K562 (cell line): ENCODE measurements at regions of chr16 and their contacts with region 1.

Region 1: DNA sequence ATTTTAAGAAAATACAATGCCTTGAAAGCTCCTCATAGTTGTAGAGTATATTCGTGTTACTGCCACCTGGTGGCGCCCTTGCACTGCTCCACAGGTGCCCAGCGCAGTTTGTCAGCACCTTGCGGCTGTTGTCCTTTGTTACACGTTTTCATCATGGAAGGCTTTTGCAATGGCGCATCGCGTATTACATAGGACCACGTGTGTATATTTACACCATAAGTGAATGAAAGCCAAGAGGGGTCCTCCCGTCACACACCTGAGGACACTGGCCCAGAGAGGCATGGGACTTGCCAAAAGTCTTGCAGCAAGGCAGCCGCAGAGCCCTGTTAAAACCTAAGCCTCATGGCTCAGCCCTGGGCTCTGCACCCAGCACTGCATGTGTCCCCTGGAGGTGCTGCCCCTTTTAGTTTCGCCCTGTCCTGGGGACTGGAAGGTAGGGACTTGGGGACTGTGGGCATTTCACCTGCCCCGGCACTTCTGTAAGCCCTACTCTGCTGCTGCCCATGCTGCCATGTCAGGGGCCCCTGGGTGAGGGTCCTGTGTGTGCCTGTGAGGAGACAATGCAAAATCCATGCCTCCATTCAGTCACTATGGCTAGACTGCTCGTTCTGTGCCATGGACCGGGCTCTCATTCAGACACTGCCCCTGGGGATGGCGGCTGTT is 24.3 kb downstream of the POLR3E start:
- DNase-seq: peak; percentile 66 to 76 (median 70)
- ATAC-seq: peak; percentile 91
- H3K4me3 ChIP-seq: no peak overlapping the region
- H3K27ac ChIP-seq: no peak overlapping the region
- H3K4me1 ChIP-seq: no peaks in the 10 kb centered on the region; a peak in 2 of 5 replicates
- H3K27me3 ChIP-seq: no peaks in the 10 kb centered on the region
- CTCF ChIP-seq: peak; percentile 96 to 98 (median 97)
- EP300 ChIP-seq: no peak
- POLR2A ChIP-seq: no peak
- RAD21 ChIP-seq: peak; percentile 87 to 92

Region 2: GRCh38 chr16:21150375-21151001 is 1171.0 kb before region 1 on chr16 and contains the start of gene DNAH3:
- CTCF ChIA-PET with region 1: interaction called, 3 read pairs
- POLR2A ChIA-PET with region 1: no interaction called
- in situ Hi-C with region 1: loop called (anchors 10 kb)
- intact Hi-C with region 1: loop called (anchors 2 kb)
- DNase-seq: peak; percentile 14 to 62 (median 28)
- ATAC-seq: peak; percentile 70
- H3K4me3 ChIP-seq: no peak within 1 kb of the TSS
- H3K27ac ChIP-seq: no peak within 1 kb of the TSS
- H3K4me1 ChIP-seq: peaks cover 4 to 6% of the 10 kb centered on the region in 2 experiments; a peak in 2 of 5 replicates
- H3K27me3 ChIP-seq: peaks cover 4% of the 10 kb centered on the region in 2 experiments; a peak in 3 of 5 replicates
- CTCF ChIP-seq: 0 out of 6 replicates have a peak, but pooled peaks of 1 of the 3 experiments have one; percentile 4
- EP300 ChIP-seq: no peak
- POLR2A ChIP-seq: no peak
- RAD21 ChIP-seq: no peak
- polyA plus RNA-seq, gene DNAH3: 0.65 to 0.84 TPM

Region 3: DNA sequence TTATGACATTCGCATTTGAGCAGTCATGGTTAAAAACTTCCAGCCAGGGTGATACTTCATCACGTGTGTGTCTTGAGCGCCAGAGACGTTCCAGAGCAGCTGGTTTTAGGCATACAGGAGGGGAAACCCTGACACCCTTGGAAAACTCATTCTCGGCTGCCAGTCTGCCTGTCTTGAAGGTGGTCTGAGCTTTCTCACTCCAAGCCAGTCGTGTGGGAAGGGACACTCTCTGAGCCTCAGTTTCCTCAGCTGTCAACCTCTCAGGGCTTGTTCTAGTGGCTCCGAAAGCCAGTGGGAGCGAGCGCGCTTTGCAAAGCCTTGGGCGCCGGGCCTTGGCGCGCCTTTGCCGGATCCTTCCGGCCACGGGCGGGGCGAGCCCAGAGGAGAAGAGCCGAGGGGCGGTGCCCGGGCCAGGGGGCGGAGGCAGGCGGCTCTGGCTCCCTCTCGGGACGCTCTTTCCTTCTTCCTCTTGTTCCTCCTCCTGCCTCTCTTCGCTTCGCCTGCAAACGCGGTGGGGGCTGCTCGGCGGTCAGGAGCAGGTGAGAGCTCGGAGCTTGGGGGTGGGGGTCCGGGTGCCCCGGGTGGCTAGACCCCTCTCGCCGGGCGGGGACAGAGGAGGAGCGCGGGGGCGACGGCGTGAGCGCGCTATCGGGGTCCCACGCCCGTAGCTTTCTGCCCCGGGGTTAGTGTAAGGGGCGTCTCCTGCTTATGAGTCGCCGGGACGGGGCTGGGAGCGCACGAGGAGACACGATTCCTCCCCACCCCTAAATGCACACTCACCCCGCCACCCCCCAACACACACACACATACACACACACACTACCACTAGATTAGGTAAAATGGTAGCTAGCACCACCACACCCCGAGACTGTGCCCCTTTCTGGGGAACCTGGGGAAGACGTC is 1163.0 kb before region 1 on chr16 and contains the start of gene LDAF1:
- CTCF ChIA-PET with region 1: interaction called, 9 read pairs
- POLR2A ChIA-PET with region 1: no interaction called
- in situ Hi-C with region 1: loop called (anchors 10 kb)
- intact Hi-C with region 1: loop called (anchors 2 kb)
- DNase-seq: peak; percentile 90 to 92 (median 92)
- ATAC-seq: peak; percentile 99
- H3K4me3 ChIP-seq: peak within 1 kb of the TSS; percentile 70
- H3K27ac ChIP-seq: peak within 1 kb of the TSS; percentile 58; the same call in 2 of the 3 replicates
- H3K4me1 ChIP-seq: peaks cover 10 to 17% of the 10 kb centered on the region in 2 experiments
- H3K27me3 ChIP-seq: no peaks in the 10 kb centered on the region
- CTCF ChIP-seq: no peak; a peak in 1 of 6 replicates
- EP300 ChIP-seq: no peak
- POLR2A ChIP-seq: peak; percentile 77
- RAD21 ChIP-seq: no peak
- polyA plus RNA-seq, gene LDAF1: 13.7 to 20.1 TPM

Region 4: DNA sequence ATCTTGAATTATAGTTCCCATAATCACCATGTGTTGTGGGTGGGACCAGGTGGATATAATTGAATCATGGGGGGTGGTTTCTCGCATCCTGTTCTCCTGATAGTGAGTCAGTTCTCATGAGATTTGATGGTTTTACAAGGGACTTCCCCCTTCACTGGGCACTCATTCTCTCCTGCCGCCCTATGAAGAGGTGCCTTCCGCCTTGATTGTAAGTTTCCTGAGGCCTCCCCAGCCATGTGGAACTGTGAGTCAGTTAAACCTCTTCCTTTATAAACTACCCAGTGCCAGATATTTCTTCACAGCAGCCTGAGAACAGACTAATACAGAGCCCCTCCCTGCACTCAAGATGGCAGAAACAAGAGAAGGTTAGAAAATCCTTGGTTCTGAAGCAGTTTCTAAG is 1136.6 kb before region 1 on chr16:
- CTCF ChIA-PET with region 1: interaction called, 4 read pairs
- POLR2A ChIA-PET with region 1: no interaction called
- in situ Hi-C with region 1: no loop called
- intact Hi-C with region 1: loop called (anchors 10 kb)
- DNase-seq: no peak
- ATAC-seq: no peak
- H3K4me3 ChIP-seq: no peak overlapping the region
- H3K27ac ChIP-seq: no peak overlapping the region
- H3K4me1 ChIP-seq: peaks cover 5 to 8% of the 10 kb centered on the region in 2 experiments; a peak in 3 of 5 replicates
- H3K27me3 ChIP-seq: no peaks in the 10 kb centered on the region
- CTCF ChIP-seq: no peak
- EP300 ChIP-seq: no peak
- POLR2A ChIP-seq: no peak
- RAD21 ChIP-seq: no peak

Region 5: DNA sequence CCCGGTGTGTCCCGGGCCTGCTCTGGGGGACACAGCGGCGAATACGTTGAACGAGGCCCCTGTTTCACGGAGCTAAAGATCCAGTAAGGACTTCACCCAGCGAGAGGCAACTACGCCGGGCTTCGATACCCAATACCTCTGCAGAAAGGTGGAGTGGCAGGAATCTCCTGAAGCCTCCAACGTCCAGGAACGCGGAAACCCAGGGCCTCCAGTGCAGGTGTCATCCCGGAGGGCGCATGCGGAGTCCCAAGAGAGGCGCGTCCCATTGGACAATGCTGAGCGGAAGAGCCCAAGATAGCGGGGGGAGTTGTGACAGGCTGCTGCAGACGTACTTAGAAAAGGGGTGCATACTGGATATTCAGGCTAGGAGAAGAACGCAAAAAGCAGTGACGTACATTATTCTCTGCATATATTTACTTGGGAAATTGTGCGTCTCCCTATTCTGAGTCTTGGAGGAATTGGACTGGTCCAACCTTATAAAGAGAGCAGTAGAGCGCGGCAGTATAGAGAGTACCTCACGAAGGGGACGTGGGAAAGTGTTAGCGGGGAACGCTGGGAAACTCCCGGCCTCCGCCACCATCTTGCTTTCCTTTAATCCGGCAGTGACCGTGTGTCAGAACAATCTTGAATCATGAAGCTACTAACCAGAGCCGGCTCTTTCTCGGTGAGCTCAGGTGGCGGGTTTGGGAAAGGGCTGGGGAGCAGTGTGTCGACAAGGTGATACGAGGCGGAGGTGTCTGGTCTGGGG is 368.5 kb before region 1 on chr16 and contains the start of gene UQCRC2:
- CTCF ChIA-PET with region 1: no interaction called
- POLR2A ChIA-PET with region 1: no interaction called
- in situ Hi-C with region 1: no loop called
- intact Hi-C with region 1: no loop called
- DNase-seq: peak; percentile 91 to 94 (median 92)
- ATAC-seq: peak; percentile 96
- H3K4me3 ChIP-seq: peak within 1 kb of the TSS; percentile 92
- H3K27ac ChIP-seq: peak within 1 kb of the TSS; percentile 98
- H3K4me1 ChIP-seq: peaks cover 4 to 7% of the 10 kb centered on the region in 2 experiments; a peak in 3 of 5 replicates
- H3K27me3 ChIP-seq: no peaks in the 10 kb centered on the region
- CTCF ChIP-seq: no peak
- EP300 ChIP-seq: no peak; the same call in 1 of the 2 replicates
- POLR2A ChIP-seq: peak; percentile 94
- RAD21 ChIP-seq: no peak
- polyA plus RNA-seq, gene UQCRC2: 284 to 424 TPM